ENCODE measurements at regions of chr1 and their contacts with region 1.

Region 1: GRCh38 chr1:13749543-13750341 is 49.8 kb downstream of the PRDM2 start:
- DNase-seq: peak; percentile 68
- ATAC-seq: peak; percentile 45
- H3K4me3 Mint-ChIP-seq: peak overlapping the region; percentile 88
- H3K27ac Mint-ChIP-seq: peak overlapping the region; percentile 91
- H3K4me1 Mint-ChIP-seq: peaks cover 48% of the 10 kb centered on the region
- H3K27me3 Mint-ChIP-seq: no peaks in the 10 kb centered on the region
- CTCF ChIP-seq: no peak

Region 2: DNA sequence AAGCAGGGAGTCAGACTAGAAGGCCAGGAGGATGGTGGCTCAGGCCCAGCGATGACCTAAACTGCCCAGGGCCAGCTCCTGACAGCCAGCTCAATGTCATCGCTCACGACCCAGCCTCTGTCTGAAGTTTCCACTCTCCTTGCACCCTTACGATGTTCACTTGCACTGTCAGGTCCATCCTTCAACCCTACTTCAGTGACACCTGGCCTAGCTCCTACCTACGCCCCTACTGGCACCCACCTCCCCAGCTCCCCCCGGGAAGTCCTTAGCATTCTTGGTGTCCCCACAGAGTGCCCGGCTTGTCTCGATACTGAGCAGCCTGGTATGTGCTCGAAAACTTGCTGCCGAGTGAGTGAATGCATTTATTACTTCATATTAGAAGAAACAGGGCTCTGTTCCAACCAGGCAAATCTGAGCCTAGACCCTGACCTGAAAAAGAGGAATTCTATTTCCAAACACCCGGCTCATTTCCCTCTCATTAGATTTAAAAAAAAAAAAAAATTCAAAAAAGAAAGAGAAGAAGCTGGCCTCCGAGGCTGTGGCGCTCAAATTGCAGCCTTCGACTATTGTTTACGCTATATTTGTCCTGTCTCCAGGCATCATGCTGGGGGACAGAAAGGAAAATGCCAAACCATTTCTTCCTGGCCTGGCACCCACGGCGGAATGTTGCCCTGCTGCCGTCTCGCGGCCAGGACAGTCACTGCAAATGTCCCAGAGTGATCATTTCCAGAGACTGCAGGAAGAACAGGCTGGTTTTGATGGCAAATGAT is 206.1 kb before region 1 on chr1:
- CTCF ChIA-PET with region 1: no interaction called
- POLR2A ChIA-PET with region 1: no interaction called
- intact Hi-C with region 1: no loop called
- DNase-seq: no peak
- ATAC-seq: no peak
- H3K4me3 Mint-ChIP-seq: no peak overlapping the region
- H3K27ac Mint-ChIP-seq: no peak overlapping the region
- H3K4me1 Mint-ChIP-seq: no peaks in the 10 kb centered on the region
- H3K27me3 Mint-ChIP-seq: peaks cover 2% of the 10 kb centered on the region
- CTCF ChIP-seq: no peak

Region 3: DNA sequence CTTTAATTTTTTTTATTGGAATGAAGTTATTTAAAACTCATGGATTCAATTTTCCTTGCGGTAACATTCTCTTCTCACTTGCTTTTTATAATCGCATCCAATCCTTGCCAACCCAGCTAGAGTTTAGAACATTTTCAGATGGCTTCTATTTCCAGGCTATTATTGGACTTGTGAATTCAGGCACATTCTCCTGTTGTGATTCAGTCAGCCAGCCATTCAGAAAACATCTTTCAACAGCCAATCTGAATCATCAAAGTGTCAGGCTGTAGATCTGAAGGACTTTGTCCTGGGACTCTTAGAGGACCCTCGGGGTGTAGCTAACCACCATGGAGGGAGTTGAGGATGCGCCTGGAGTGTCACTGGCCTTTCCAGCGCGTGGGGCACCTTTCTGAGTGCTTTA is 42.7 kb after region 1 on chr1:
- CTCF ChIA-PET with region 1: interaction called, 3 read pairs
- POLR2A ChIA-PET with region 1: interaction called, 3 read pairs
- intact Hi-C with region 1: loop called (anchors 5 kb)
- DNase-seq: no peak
- ATAC-seq: no peak
- H3K4me3 Mint-ChIP-seq: no peak overlapping the region
- H3K27ac Mint-ChIP-seq: no peak overlapping the region
- H3K4me1 Mint-ChIP-seq: peaks cover 81% of the 10 kb centered on the region
- H3K27me3 Mint-ChIP-seq: no peaks in the 10 kb centered on the region
- CTCF ChIP-seq: no peak

Region 4: DNA sequence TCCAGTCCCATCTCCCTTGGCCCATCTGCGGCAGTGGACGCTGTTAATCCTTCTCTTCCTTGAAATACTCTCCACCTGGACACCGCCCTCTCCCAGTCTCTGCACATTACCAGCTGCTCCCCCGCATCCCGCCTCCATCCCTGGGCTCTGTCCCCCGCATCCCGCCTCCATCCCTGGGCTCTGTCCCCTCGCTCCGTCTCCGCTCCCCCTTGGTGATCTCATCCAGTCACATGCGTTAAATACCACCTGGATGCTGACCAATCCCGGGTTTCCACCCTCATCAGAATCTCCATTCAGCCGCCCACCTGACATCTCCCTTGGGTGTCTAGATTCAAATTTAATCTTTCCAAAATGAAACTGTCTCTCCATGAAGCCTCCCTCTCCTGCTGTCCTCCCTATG is 56.4 kb after region 1 on chr1:
- CTCF ChIA-PET with region 1: no interaction called
- POLR2A ChIA-PET with region 1: no interaction called
- intact Hi-C with region 1: no loop called
- DNase-seq: no peak
- ATAC-seq: no peak
- H3K4me3 Mint-ChIP-seq: no peak overlapping the region
- H3K27ac Mint-ChIP-seq: no peak overlapping the region
- H3K4me1 Mint-ChIP-seq: peaks cover 20% of the 10 kb centered on the region
- H3K27me3 Mint-ChIP-seq: no peaks in the 10 kb centered on the region
- CTCF ChIP-seq: no peak

Region 5: DNA sequence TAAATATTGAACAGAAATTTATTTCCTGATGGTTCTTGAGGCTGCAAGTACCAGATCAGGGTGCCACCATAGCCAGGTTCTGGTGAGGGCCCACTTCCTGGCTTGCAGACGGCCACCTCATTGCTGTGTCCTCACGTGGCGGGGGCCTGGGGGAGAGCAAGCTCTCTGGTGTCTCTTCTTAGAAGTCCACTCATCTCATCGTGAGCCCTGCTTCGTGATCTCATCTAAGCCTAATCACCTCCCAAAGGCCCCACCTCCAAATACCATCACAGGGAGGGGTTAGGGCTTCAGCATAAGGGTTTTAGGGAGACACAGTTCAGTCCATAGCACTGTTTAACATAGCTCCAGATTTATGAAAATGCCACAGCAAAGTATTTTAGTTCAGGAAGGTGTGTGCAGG is 69.9 kb after region 1 on chr1:
- CTCF ChIA-PET with region 1: no interaction called
- POLR2A ChIA-PET with region 1: no interaction called
- intact Hi-C with region 1: no loop called
- DNase-seq: no peak
- ATAC-seq: no peak
- H3K4me3 Mint-ChIP-seq: no peak overlapping the region
- H3K27ac Mint-ChIP-seq: no peak overlapping the region
- H3K4me1 Mint-ChIP-seq: no peaks in the 10 kb centered on the region
- H3K27me3 Mint-ChIP-seq: no peaks in the 10 kb centered on the region
- CTCF ChIP-seq: no peak

Region 6: DNA sequence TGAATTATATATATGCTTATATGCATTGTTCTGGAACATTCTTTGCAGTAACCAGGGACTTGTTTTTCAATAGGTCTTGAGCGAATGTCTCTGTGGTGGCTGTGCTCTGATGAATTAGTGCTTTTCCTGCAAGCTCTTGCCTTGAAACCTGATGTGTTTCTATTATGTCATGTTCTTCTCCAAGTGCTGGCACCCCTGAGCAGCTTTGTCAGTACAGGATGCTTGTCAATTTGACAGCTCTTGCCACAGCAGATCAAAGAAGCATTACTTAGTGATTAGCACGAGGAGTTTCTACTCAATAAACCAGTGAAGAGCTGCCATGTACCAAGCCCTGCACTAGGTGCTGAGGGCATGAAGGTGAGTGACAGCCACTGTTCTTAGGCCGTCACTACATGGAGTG is 122.1 kb after region 1 on chr1:
- CTCF ChIA-PET with region 1: no interaction called
- POLR2A ChIA-PET with region 1: no interaction called
- intact Hi-C with region 1: no loop called
- DNase-seq: no peak
- ATAC-seq: no peak
- H3K4me3 Mint-ChIP-seq: no peak overlapping the region
- H3K27ac Mint-ChIP-seq: no peak overlapping the region
- H3K4me1 Mint-ChIP-seq: no peaks in the 10 kb centered on the region
- H3K27me3 Mint-ChIP-seq: peaks cover 15% of the 10 kb centered on the region
- CTCF ChIP-seq: no peak

Measured in activated CD8-positive, alpha-beta T cell treated with anti-CD3 and anti-CD28 coated beads for 36 hours (primary cell).